ENCODE measurements at regions of chr11 and their contacts with region 1.

Region 1: GRCh38 chr11:33987975-33988580 is 63.5 kb upstream of the CAPRIN1 start:
- DNase-seq: peak; percentile 39 to 75
- ATAC-seq: peak; percentile 67 to 86 (median 83)
- H3K4me3 ChIP-seq: no peak overlapping the region
- H3K27ac ChIP-seq: no peak overlapping the region
- H3K4me1 ChIP-seq: no peaks in the 10 kb centered on the region
- H3K27me3 ChIP-seq: peaks cover 0 to 6% (median 0%) of the 10 kb centered on the region in 7 donors
- CTCF ChIP-seq: peak; percentile 67 to 92 (median 83)

Region 2: GRCh38 chr11:33802414-33802950 is 185.6 kb before region 1 on chr11:
- intact Hi-C with region 1: no loop called
- DNase-seq: peak; percentile 25 to 46
- ATAC-seq: peak; percentile 81 to 93 (median 90)
- H3K4me3 ChIP-seq: peak overlapping the region in 8 of 10 donors; percentile 24 to 50 (median 34)
- H3K27ac ChIP-seq: no peak overlapping the region
- H3K4me1 ChIP-seq: peaks cover 0 to 15% (median 8%) of the 10 kb centered on the region in 9 donors
- H3K27me3 ChIP-seq: peaks cover 4 to 61% (median 50%) of the 10 kb centered on the region in 7 donors
- CTCF ChIP-seq: no peak

Region 3: DNA sequence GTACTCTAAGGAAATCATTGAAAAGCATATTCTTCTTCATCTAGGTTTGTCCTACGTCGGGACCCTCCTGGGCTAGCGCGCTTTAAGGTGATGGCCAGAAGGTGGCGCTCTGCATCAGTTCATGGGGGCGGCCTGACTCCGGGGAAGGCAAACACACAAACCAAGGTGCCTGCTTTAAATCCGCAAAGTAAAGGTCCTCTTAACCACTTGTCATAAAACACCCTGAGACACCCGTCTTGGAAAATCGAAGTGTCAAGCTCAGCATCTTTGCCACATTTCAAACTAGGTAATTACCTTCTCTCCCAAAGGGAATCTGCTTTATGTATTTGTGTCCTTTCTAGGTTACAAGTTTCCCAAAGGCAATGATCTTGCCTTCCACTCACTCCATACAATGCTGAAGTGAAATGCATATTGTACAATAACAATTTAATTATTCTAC is 130.1 kb before region 1 on chr11:
- intact Hi-C with region 1: loop called in 4 of 10 experiments (anchors 1 to 5 kb)
- DNase-seq: peak; percentile 80 to 81
- ATAC-seq: peak; percentile 79 to 95 (median 94)
- H3K4me3 ChIP-seq: no peak overlapping the region
- H3K27ac ChIP-seq: no peak overlapping the region
- H3K4me1 ChIP-seq: peaks cover 0 to 20% (median 0%) of the 10 kb centered on the region in 9 donors
- H3K27me3 ChIP-seq: peaks cover 0 to 10% (median 0%) of the 10 kb centered on the region in 7 donors
- CTCF ChIP-seq: peak; percentile 87 to 98 (median 94)

Region 4: DNA sequence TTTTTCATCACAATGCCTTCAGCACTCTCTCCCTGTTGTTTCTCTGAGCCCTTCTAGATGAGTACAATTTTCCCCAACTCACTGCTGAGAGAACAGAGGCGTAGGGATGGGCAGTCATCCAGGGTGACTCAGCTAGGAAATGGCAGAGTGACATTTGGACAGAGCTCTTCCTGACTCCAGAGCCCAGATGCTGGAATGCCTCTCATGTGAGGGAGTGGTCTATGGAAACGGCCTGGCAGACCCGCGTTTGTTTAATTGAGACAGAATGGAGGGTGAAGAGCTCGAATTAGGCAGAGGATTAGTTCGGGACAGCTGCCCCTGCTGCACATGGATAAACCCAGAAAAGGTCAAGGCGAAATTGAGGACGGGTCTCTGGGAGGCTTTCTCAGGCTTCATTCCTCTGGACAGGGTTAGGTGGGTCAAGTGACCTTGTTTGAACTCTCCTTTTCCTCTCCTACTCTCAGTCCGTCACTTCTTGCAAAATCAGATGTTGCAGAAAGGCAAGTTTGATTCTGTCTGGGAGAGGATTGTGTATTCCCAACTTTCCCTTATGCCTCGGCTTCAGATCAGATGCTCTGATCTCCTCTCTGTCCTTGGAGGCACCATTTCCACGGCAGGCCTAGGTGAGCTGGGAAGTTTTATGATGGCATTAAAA is 88.6 kb before region 1 on chr11:
- intact Hi-C with region 1: no loop called
- DNase-seq: peak; percentile 54 to 88
- ATAC-seq: peak; percentile 96 to 99 (median 96)
- H3K4me3 ChIP-seq: no peak overlapping the region
- H3K27ac ChIP-seq: peak overlapping the region in 5 of 10 donors; percentile 6 to 23 (median 17)
- H3K4me1 ChIP-seq: peaks cover 3 to 45% (median 15%) of the 10 kb centered on the region in 9 donors
- H3K27me3 ChIP-seq: no peaks in the 10 kb centered on the region
- CTCF ChIP-seq: no peak